Activated CD4-positive, alpha-beta memory T cell treated with anti-CD3 and anti-CD28 coated beads for 36 hours (primary cell): ENCODE measurements at regions of chr15 and their contacts with region 1.

Region 1: DNA sequence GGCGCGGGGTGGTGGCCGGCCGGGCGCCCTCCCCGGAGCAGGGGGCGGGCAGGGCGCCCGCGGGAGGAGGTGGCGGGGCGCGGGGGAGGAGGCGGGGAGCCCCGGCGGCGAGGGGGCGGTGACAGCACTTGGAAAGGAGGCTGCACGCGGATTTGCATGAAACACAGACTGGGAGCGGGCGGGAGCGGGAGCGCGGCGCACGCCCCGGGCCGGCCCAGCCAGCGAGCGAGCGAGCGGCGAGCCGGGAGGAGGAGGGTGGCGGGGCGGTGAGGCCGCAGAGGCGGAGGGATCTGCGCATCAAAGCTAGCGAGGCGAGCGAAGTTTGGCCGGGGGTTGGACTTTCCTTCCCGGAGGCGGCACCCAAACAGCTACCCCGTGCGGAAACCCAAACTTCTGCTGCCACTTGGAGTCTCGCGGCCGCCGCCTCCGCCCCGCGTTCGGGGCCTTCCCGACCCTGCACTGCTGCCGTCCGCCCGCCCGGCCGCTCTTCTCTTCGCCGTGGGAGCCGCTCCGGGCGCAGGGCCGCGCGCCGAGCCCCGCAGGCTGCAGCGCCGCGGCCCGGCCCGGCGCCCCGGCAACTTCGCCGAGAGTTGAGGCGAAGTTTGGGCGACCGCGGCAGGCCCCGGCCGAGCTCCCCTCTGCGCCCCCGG is at the start of gene SMAD3:
- DNase-seq: peak; percentile 86
- H3K4me3 Mint-ChIP-seq: peak within 1 kb of the TSS; percentile 95
- H3K27ac Mint-ChIP-seq: peak within 1 kb of the TSS; percentile 90
- H3K4me1 Mint-ChIP-seq: peaks cover 41% of the 10 kb centered on the region
- H3K27me3 Mint-ChIP-seq: peaks cover 10% of the 10 kb centered on the region
- total RNA-seq, gene SMAD3: 50.2 to 50.5 TPM

Region 2: DNA sequence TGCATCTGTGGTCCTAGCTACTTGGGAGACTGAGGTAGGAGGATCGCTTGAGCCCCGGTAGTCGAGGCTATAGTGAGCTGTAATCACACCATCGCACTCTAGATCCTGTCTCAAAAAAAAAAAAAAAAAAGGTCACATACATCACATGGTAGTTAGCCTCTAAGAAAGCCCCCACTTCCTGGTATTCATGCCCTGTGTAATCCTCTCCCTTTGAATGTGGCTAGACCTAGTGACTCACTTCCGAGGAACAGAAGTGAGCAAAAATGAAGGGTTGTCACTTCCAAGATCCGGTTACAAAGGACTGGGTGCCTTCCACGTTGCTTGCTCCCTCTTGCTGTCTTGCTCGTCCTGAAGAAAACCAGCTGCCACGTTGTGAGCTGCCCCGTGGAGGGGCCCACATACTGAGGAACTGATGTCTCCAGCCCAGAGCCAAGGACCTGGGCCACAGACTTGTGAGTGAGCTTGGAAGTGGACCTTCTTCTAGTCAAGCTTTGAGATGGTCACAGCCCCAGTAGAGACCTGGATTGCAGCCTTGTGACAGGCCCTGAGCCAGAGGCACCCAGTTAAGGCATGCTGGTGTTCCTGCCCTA is 487.2 kb before region 1 on chr15:
- CTCF ChIA-PET with region 1: no interaction called
- POLR2A ChIA-PET with region 1: no interaction called
- intact Hi-C with region 1: no loop called
- DNase-seq: peak; percentile 19
- H3K4me3 Mint-ChIP-seq: no peak overlapping the region
- H3K27ac Mint-ChIP-seq: peak overlapping the region; percentile 18
- H3K4me1 Mint-ChIP-seq: peaks cover 11% of the 10 kb centered on the region
- H3K27me3 Mint-ChIP-seq: no peaks in the 10 kb centered on the region

Region 3: GRCh38 chr15:67080900-67081431 is 15.4 kb after region 1 on chr15:
- CTCF ChIA-PET with region 1: interaction called, 69 read pairs
- POLR2A ChIA-PET with region 1: interaction called, 54 read pairs
- intact Hi-C with region 1: loop called (anchors 1 kb)
- DNase-seq: peak; percentile 89
- H3K4me3 Mint-ChIP-seq: no peak overlapping the region
- H3K27ac Mint-ChIP-seq: peak overlapping the region; percentile 82
- H3K4me1 Mint-ChIP-seq: peaks cover 96% of the 10 kb centered on the region
- H3K27me3 Mint-ChIP-seq: no peaks in the 10 kb centered on the region

Region 4: GRCh38 chr15:67114846-67115600 is 49.5 kb after region 1 on chr15:
- CTCF ChIA-PET with region 1: interaction called, 4 read pairs
- POLR2A ChIA-PET with region 1: interaction called, 3 read pairs
- intact Hi-C with region 1: loop called (anchors 5 kb)
- DNase-seq: peak; percentile 60
- H3K4me3 Mint-ChIP-seq: peak overlapping the region; percentile 7
- H3K27ac Mint-ChIP-seq: peak overlapping the region; percentile 95
- H3K4me1 Mint-ChIP-seq: peaks cover 90% of the 10 kb centered on the region
- H3K27me3 Mint-ChIP-seq: no peaks in the 10 kb centered on the region

Region 5: GRCh38 chr15:67150028-67150860 is 84.7 kb after region 1 on chr15:
- CTCF ChIA-PET with region 1: interaction called, 3 read pairs
- POLR2A ChIA-PET with region 1: interaction called, 3 read pairs
- intact Hi-C with region 1: loop called (anchors 1 kb)
- DNase-seq: peak; percentile 76
- H3K4me3 Mint-ChIP-seq: peak overlapping the region; percentile 62
- H3K27ac Mint-ChIP-seq: peak overlapping the region; percentile 85
- H3K4me1 Mint-ChIP-seq: peaks cover 73% of the 10 kb centered on the region
- H3K27me3 Mint-ChIP-seq: no peaks in the 10 kb centered on the region

Region 6: GRCh38 chr15:67839929-67840748 is 774.6 kb after region 1 on chr15 and contains the start of gene RNU6-1:
- CTCF ChIA-PET with region 1: no interaction called
- POLR2A ChIA-PET with region 1: no interaction called
- intact Hi-C with region 1: loop called (anchors 10 kb)
- DNase-seq: peak; percentile 96
- H3K4me3 Mint-ChIP-seq: peak within 1 kb of the TSS; percentile 88
- H3K27ac Mint-ChIP-seq: peak within 1 kb of the TSS; percentile 95
- H3K4me1 Mint-ChIP-seq: peaks cover 37% of the 10 kb centered on the region
- H3K27me3 Mint-ChIP-seq: peaks cover 18% of the 10 kb centered on the region
- total RNA-seq, gene RNU6-1: not detected